ENCODE measurements at regions of chr6 and their contacts with region 1.

Region 1: DNA sequence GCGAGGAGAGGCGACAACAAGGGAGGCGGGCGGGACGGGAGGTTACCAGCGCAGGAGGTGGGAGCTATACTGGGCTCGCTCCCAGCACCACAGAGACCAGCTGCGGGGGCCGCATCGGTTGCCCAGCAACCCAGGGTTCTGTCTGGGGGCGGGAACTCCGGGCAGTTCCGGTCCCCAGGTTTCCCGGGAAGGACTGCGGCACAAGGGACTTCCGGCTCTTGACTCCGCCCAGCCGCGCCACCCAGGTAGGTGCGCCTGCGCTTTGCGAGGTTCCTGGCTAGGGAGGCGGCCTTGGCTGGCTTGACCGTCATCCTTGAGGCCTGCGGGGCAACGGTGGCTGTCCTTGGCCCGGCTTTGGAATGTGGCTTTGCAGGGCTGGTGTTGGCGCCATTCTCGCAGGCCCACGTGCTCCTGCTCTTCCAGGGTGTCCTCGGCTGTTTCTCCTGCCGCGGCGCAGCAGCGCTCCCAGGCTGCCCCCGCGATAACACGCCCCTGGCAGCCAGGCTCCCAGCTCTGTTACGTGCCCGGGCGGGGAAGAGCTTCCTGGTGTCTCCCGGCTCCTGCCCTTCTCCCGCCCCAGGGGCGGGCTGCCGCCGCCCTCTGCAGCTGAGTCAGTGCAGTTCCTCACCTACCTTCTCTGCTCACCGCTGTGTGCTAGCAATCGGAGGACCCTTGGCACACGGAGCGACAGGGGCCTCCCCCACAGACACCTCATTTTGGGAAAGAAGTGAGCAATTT is at the start of gene RSPH3:
- DNase-seq: peak; percentile 79 to 99 (median 92)

Region 2: GRCh38 chr6:159104163-159104925 is 104.5 kb after region 1 on chr6:
- intact Hi-C with region 1: loop called (anchors 10 kb)
- DNase-seq: peak; percentile 33 to 93 (median 62)

Region 3: DNA sequence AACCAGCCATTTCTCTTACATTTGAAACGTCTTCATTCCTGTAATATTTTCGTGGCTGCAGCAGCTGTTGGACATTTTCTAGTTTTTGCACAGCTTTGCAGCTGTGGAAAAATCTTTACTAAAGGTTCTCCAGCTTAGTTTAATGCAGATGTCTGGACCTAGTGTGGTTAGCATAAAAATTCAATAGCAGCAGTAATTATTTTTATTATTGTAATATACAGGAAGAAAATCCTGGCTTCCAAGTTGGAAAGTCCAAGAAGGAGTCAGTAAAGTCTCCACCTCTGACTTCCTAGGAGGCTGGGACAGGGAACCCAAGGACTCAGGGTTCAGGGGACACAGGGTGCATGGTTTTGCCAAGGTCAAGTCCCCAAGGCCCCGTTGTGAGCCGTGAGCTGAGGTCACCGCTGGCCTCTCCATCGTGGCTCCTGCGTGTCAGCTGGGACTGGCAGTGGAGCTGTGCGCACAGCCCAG is 400.0 kb after region 1 on chr6:
- intact Hi-C with region 1: no loop called
- DNase-seq: no peak

Measured in posterior cingulate gyrus (tissue), 11 donors.